ENCODE measurements at regions of chr6 and their contacts with region 1.

Region 1: GRCh38 chr6:56364827-56365313 is 117.5 kb upstream of the COL21A1 start:
- DNase-seq: no peak
- ATAC-seq: no peak
- H3K4me3 ChIP-seq: no peak overlapping the region
- H3K27ac ChIP-seq: no peak overlapping the region
- H3K4me1 ChIP-seq: peaks cover 1 to 39% (median 24%) of the 10 kb centered on the region in 12 donors
- H3K27me3 ChIP-seq: no peaks in the 10 kb centered on the region
- CTCF ChIP-seq: no peak
- POLR2A ChIP-seq: no peak

Region 2: GRCh38 chr6:56437171-56437900 is 72.5 kb after region 1 on chr6:
- intact Hi-C with region 1: no loop called
- DNase-seq: no peak
- ATAC-seq: no peak
- H3K4me3 ChIP-seq: no peak overlapping the region
- H3K27ac ChIP-seq: no peak overlapping the region
- H3K4me1 ChIP-seq: no peaks in the 10 kb centered on the region
- H3K27me3 ChIP-seq: no peaks in the 10 kb centered on the region
- CTCF ChIP-seq: no peak
- POLR2A ChIP-seq: no peak

Region 3: DNA sequence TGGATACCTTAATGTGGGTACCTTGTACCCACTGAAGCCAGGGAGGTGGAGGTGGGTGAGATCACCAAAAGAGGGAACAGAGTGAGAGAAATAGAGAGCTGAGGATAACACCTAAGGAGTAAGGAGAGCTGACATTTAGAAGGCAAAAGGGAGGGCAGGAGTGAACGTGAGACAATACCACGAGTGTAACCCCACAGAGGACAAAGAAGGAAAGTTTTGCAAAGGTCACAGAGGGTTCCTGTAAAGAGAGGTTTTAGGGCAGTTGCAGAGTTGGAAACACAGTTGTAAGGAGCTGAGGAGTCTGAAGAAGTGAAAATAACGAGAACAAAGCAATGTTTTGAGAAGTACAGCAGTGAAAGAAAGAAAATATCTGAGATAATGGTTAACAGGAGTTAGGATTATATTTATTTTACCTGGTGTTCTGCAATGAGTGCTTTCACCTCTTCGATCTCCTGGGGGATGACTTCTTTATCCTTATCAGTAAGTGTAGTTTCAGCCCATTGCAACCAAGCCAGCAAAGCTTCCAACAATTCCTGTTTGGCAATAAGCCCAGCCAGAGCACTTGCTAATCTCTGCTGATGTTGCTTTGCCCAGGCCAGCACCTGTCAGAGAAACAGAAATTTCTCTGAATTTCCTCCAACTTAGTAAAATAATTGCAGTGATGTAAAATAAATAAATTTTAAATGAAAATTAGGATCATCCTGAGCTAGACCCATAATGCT is 111.0 kb after region 1 on chr6:
- intact Hi-C with region 1: loop called in 3 of 10 experiments (anchors 5 to 10 kb)
- DNase-seq: peak in 4 of 5 donors; percentile 43 to 68 (median 52)
- ATAC-seq: peak; percentile 73 to 89 (median 86)
- H3K4me3 ChIP-seq: no peak overlapping the region
- H3K27ac ChIP-seq: peak overlapping the region in 4 of 12 donors; percentile 20 to 26 (median 22)
- H3K4me1 ChIP-seq: peaks cover 0 to 26% (median 15%) of the 10 kb centered on the region in 12 donors
- H3K27me3 ChIP-seq: no peaks in the 10 kb centered on the region
- CTCF ChIP-seq: no peak
- POLR2A ChIP-seq: no peak

Region 4: GRCh38 chr6:56555438-56555872 is 190.6 kb after region 1 on chr6:
- intact Hi-C with region 1: loop called in 1 of 10 experiments (anchors 5 kb)
- DNase-seq: peak in 4 of 5 donors; percentile 28 to 51 (median 40)
- ATAC-seq: peak; percentile 88 to 98 (median 91)
- H3K4me3 ChIP-seq: no peak overlapping the region
- H3K27ac ChIP-seq: peak overlapping the region in 10 of 12 donors; percentile 16 to 74 (median 52)
- H3K4me1 ChIP-seq: peaks cover 6 to 54% (median 25%) of the 10 kb centered on the region in 12 donors
- H3K27me3 ChIP-seq: no peaks in the 10 kb centered on the region
- CTCF ChIP-seq: no peak
- POLR2A ChIP-seq: no peak

Region 5: DNA sequence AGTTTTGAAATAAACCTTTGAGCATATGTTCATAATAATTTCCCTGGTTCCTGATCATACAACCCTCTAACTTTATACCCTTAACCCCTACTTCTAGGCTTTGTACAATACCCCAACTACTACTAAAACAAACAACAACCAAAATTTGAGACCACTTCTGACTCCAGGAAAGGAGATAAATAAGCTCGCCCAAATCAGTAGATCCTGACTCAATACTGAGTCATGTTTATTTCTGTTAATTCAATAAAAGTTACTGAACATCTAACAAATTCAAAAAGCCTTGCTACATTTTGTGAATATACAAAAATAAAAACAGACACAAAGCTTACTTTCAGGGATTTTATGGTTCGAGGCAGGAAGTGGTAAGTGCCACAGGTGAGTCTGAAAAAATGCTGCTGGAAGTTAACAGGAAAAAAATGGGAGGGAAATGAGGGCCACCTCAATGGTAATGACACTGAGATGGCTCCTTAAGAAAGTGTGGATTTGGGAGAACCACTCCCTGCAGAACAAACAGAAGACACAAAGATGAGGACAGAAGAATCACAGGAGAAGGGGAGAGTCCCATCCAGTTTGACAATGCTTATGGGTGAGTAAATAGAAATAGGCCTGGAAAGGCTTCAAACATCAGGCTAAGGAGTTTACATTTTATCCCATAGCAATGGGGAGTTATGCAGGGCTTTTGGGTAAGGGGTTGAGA is 214.4 kb after region 1 on chr6:
- intact Hi-C with region 1: loop called in 2 of 10 experiments (anchors 5 kb)
- DNase-seq: no peak
- ATAC-seq: no peak
- H3K4me3 ChIP-seq: no peak overlapping the region
- H3K27ac ChIP-seq: no peak overlapping the region
- H3K4me1 ChIP-seq: peaks cover 0 to 15% (median 0%) of the 10 kb centered on the region in 12 donors
- H3K27me3 ChIP-seq: no peaks in the 10 kb centered on the region
- CTCF ChIP-seq: no peak
- POLR2A ChIP-seq: no peak

Region 6: GRCh38 chr6:56851541-56852259 is 486.8 kb after region 1 on chr6:
- intact Hi-C with region 1: loop called in 3 of 10 experiments (anchors 10 kb)
- DNase-seq: peak in 3 of 5 donors; percentile 48 to 61 (median 53)
- ATAC-seq: peak; percentile 77 to 92 (median 88)
- H3K4me3 ChIP-seq: peak overlapping the region in 11 of 12 donors; percentile 26 to 75 (median 56)
- H3K27ac ChIP-seq: peak overlapping the region in 11 of 12 donors; percentile 24 to 74 (median 45)
- H3K4me1 ChIP-seq: peaks cover 0 to 39% (median 24%) of the 10 kb centered on the region in 12 donors
- H3K27me3 ChIP-seq: no peaks in the 10 kb centered on the region
- CTCF ChIP-seq: peak; percentile 42 to 76 (median 68)
- POLR2A ChIP-seq: no peak